Right lobe of liver (tissue), 6 donors: ENCODE measurements at regions of chr19 and their contacts with region 1.

Region 1: DNA sequence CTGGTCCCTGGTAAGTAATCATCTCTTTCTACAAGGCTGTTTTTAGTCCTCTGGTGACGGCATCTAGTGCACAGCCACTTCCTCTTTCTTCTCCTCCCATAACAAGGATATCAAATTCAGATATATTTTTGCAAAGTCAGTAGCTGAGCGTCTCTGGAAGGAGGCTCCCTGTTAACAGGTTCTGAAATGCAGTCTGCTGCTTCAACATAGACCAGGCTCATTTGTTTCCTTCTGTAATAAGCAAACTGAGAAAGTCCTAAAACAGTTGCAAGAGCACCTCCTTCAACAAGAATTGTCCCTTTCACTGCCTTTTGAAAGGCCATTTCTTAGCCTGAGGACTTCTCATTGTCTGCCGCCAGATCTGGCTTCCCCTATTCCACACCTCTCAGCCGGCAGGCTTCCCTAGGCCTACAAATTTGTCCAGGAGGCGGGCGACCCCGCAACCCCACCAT is 7.4 kb upstream of the ZSCAN5A start:
- DNase-seq: no peak
- ATAC-seq: peak in 2 of 4 donors; percentile 54 to 59
- H3K4me3 ChIP-seq: no peak overlapping the region
- H3K27ac ChIP-seq: no peak overlapping the region
- H3K4me1 ChIP-seq: peaks cover 0 to under 1% (median 0%) of the 10 kb centered on the region in 4 donors
- H3K27me3 ChIP-seq: no peaks in the 10 kb centered on the region
- CTCF ChIP-seq: no peak
- POLR2A ChIP-seq: no peak

Region 2: DNA sequence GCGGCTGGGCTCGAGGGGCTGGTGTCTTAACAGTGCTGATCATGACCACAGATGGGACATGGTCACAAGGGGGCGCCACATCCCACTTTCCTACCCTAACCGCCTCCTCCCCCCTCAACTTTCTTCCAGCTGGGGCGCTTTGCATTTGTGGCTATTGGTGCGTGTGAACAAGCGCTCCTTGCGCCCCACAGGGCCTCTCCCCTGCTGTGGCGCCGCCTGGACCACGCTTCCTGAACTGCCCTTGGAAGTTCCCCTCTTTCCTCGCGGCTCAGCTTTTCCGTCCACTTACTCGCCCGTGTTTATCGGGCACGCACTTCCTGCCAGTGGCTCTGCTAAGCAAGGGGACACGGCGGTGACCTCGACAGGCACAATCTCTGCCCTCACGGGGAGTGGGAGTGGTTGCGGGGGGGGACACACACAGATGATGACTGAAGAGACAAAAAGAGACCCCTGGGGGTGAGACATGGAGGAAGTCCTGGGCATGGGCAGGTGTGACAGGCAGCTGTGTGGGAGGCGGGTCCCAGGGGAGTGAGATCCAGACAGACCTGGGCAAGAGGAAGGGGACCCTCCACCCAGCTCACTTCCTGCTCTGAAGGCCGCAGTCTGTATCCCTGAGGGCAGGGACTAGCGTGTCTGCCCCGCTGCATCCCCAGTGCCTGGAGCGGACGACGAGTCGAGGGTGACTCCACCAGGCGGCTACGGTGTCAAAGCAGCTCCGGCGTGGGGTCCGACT is 241.2 kb before region 1 on chr19:
- intact Hi-C with region 1: loop called in 1 of 2 experiments (anchors 10 kb)
- DNase-seq: peak; percentile 77 to 79 (median 78)
- ATAC-seq: peak; percentile 81 to 84 (median 82)
- H3K4me3 ChIP-seq: peak overlapping the region; percentile 23 to 42 (median 30)
- H3K27ac ChIP-seq: no peak overlapping the region
- H3K4me1 ChIP-seq: peaks cover 0 to 9% (median 0%) of the 10 kb centered on the region in 4 donors
- H3K27me3 ChIP-seq: no peaks in the 10 kb centered on the region
- CTCF ChIP-seq: peak; percentile 44 to 50 (median 48)
- POLR2A ChIP-seq: no peak